ENCODE measurements at regions of chr10 and their contacts with region 1.

Region 1: GRCh38 chr10:11209830-11210181 is 192.1 kb downstream of the CELF2 start:
- DNase-seq: no peak
- H3K4me3 ChIP-seq: peak overlapping the region in 1 of 2 donors; percentile 32
- H3K4me3 Mint-ChIP-seq: peak overlapping the region; percentile 68 to 94 (median 78)
- H3K27ac ChIP-seq: peak overlapping the region; percentile 52
- H3K27ac Mint-ChIP-seq: peak overlapping the region; percentile 56 to 96 (median 87)
- H3K4me1 ChIP-seq: peaks cover 100% of the 10 kb centered on the region
- H3K4me1 Mint-ChIP-seq: peaks cover 83 to 99% (median 92%) of the 10 kb centered on the region in 4 donors
- H3K27me3 ChIP-seq: no peaks in the 10 kb centered on the region
- H3K27me3 Mint-ChIP-seq: no peaks in the 10 kb centered on the region

Region 2: GRCh38 chr10:11170993-11171851 is 38.6 kb before region 1 on chr10:
- CTCF ChIA-PET with region 1: interaction called, 3 read pairs
- POLR2A ChIA-PET with region 1: interaction called, 7 read pairs
- intact Hi-C with region 1: loop called (anchors 2 kb)
- DNase-seq: peak in 1 of 5 donors; percentile 66
- H3K4me3 ChIP-seq: peak overlapping the region; percentile 50 to 93
- H3K4me3 Mint-ChIP-seq: no peak overlapping the region
- H3K27ac ChIP-seq: peak overlapping the region; percentile 96
- H3K27ac Mint-ChIP-seq: peak overlapping the region in 1 of 7 donors; percentile 96
- H3K4me1 ChIP-seq: peaks cover 82% of the 10 kb centered on the region
- H3K4me1 Mint-ChIP-seq: peaks cover 0 to 40% (median 21%) of the 10 kb centered on the region in 4 donors
- H3K27me3 ChIP-seq: no peaks in the 10 kb centered on the region
- H3K27me3 Mint-ChIP-seq: no peaks in the 10 kb centered on the region

Region 3: GRCh38 chr10:11270135-11270857 is 60.5 kb after region 1 on chr10:
- CTCF ChIA-PET with region 1: interaction called, 4 read pairs
- POLR2A ChIA-PET with region 1: interaction called, 5 read pairs
- intact Hi-C with region 1: loop called (anchors 5 kb)
- DNase-seq: peak; percentile 55 to 66 (median 65)
- H3K4me3 ChIP-seq: no peak overlapping the region
- H3K4me3 Mint-ChIP-seq: peak overlapping the region; percentile 2 to 44 (median 11)
- H3K27ac ChIP-seq: no peak overlapping the region
- H3K27ac Mint-ChIP-seq: peak overlapping the region; percentile 48 to 89 (median 82)
- H3K4me1 ChIP-seq: peaks cover 41% of the 10 kb centered on the region
- H3K4me1 Mint-ChIP-seq: peaks cover 45 to 84% (median 65%) of the 10 kb centered on the region in 4 donors
- H3K27me3 ChIP-seq: no peaks in the 10 kb centered on the region
- H3K27me3 Mint-ChIP-seq: no peaks in the 10 kb centered on the region

Measured in CD4-positive, alpha-beta memory T cell (primary cell).